ENCODE measurements at regions of chr1 and their contacts with region 1.

Region 1: DNA sequence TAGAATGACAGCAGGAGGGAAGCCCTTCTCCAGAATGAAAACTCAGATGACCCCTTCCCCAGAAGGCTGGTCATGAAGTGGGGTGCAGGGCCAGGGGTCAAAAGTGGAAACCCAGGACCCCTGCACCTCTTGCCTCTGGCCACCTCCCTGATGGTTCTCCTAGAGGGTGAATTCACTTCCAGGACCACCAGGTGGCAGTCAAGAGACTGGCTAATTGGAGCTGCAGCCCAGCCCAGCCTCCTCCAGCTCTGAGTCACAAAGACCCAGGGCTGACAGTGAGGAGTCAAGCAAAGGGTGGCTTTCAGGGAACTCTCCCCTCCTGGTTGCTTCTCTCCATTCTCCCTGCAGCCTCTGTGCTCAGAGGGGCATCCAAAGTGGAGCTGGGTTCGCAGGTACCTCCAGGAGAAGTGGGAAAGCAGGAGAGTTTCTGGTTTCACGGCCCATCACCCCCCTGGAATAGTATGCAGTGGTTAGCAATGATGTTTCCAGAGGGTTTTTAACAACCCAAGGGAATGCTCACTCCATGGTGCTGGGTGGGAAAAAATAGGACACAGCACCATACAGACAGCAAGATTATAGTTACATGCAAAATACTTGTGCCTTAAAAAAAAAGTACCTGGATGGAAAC is 6.1 kb upstream of the EPHB2 start:
- DNase-seq: peak; percentile 75 to 80
- H3K4me3 ChIP-seq: no peak overlapping the region
- H3K27ac ChIP-seq: no peak overlapping the region
- H3K4me1 ChIP-seq: no peaks in the 10 kb centered on the region
- H3K27me3 ChIP-seq: no peaks in the 10 kb centered on the region
- CTCF ChIP-seq: peak; percentile 67 to 86 (median 86)
- POLR2A ChIP-seq: no peak

Region 2: GRCh38 chr1:22763487-22764200 is 59.1 kb after region 1 on chr1:
- intact Hi-C with region 1: no loop called
- DNase-seq: no peak
- H3K4me3 ChIP-seq: no peak overlapping the region
- H3K27ac ChIP-seq: no peak overlapping the region
- H3K4me1 ChIP-seq: no peaks in the 10 kb centered on the region
- H3K27me3 ChIP-seq: no peaks in the 10 kb centered on the region
- CTCF ChIP-seq: no peak
- POLR2A ChIP-seq: no peak

Region 3: DNA sequence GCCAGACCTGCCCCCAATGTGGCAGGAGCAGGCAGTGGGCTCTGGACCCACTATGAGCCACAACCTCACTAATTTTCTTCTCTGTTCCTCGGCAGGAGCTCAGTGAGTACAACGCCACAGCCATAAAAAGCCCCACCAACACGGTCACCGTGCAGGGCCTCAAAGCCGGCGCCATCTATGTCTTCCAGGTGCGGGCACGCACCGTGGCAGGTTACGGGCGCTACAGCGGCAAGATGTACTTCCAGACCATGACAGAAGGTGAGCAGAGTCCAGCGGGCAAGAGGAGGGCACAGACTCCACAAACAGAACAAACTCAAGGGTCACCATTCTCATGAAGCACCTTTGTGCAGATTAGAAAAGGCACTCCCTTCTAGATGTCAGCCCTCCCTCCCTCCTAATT is 188.2 kb after region 1 on chr1:
- intact Hi-C with region 1: loop called (anchors 10 kb)
- DNase-seq: no peak
- H3K4me3 ChIP-seq: no peak overlapping the region
- H3K27ac ChIP-seq: no peak overlapping the region
- H3K4me1 ChIP-seq: no peaks in the 10 kb centered on the region
- H3K27me3 ChIP-seq: no peaks in the 10 kb centered on the region
- CTCF ChIP-seq: no peak
- POLR2A ChIP-seq: no peak